ENCODE measurements at regions of chr7 and their contacts with region 1.

Region 1: DNA sequence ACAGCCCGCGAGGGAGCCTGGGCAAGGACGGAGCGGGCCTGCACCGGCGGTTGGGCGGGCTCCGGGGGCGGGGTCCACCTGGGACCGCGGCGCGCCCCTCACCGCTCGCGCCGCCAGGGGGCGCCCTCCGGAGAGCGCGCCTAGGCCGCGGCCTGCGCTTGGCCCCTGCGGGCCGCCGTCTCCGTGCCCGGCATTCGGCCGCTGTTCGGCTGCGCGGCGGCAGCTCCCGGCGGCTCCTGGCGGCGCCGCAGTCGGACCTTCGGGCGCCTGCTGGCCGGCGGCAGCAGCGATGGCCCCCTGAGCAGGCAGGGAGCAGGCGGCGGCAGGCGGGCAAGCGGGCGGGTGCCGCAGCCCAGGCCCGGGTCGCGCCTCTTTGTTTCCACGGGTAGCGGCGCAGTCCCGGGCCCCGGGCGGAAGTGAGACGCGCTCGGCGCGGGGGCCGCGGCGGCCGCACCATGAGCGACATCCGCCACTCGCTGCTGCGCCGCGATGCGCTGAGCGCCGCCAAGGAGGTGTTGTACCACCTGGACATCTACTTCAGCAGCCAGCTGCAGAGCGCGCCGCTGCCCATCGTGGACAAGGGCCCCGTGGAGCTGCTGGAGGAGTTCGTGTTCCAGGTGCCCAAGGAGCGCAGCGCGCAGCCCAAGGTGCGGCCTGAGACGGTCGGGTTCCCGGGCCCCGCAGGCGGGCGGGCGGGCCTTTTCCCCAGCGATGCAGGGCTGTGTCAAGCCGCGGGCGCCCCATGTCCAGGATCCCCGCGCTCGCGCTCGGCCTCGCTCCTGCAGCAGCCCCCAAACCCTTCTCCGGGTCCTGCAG is at the start of gene INTS15:
- DNase-seq: peak; percentile 91
- H3K4me3 ChIP-seq: peak within 1 kb of the TSS; percentile 84
- H3K27ac ChIP-seq: peak within 1 kb of the TSS; percentile 38
- H3K4me1 ChIP-seq: peaks cover 7% of the 10 kb centered on the region; the same call in 1 of the 2 replicates
- H3K27me3 ChIP-seq: no peaks in the 10 kb centered on the region
- total RNA-seq, gene INTS15: 14.4 and 17.9 TPM in 2 replicates

Region 2: GRCh38 chr7:6640246-6640721 is 50.2 kb after region 1 on chr7:
- in situ Hi-C with region 1: loop called (anchors 5 kb)
- DNase-seq: peak; percentile 81
- H3K4me3 ChIP-seq: no peak overlapping the region
- H3K27ac ChIP-seq: 0 out of 2 replicates have a peak overlapping the region, but pooled peaks have one; percentile 24
- H3K4me1 ChIP-seq: 0 out of 2 replicates have a peak, but pooled peaks cover 3% of the 10 kb centered on the region
- H3K27me3 ChIP-seq: no peaks in the 10 kb centered on the region

Region 3: GRCh38 chr7:6934986-6935385 is 344.9 kb after region 1 on chr7:
- in situ Hi-C with region 1: loop called (anchors 25 kb)
- DNase-seq: no peak
- H3K4me3 ChIP-seq: no peak overlapping the region
- H3K27ac ChIP-seq: no peak overlapping the region
- H3K4me1 ChIP-seq: no peaks in the 10 kb centered on the region
- H3K27me3 ChIP-seq: no peaks in the 10 kb centered on the region

Measured in GM23248 (cell line).